Endothelial cell of umbilical vein (primary cell): ENCODE measurements at regions of chrX and their contacts with region 1.

Region 1: DNA sequence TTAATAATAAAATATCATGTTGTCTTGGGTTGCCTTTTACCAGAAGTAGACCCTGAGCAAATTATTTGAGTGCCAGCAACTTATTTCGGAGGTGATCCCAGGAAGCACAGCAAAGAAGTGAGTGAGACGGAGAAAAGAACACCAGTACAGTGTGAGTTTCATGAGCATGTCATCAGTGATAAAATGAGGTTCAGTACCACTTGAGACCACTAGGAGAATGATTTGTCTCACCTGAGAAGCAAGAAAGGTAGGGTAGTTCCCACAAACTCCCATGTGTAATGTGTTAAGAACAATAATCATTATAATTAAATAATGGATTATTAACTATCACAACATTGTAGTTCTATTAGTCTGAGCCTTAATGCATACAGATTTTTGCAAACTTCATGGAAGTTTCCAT is 112.8 kb upstream of the DMD start:
- DNase-seq: no peak
- H3K4me3 ChIP-seq: no peak overlapping the region
- H3K27ac ChIP-seq: no peak overlapping the region
- H3K4me1 ChIP-seq: no peaks in the 10 kb centered on the region
- H3K27me3 ChIP-seq: no peaks in the 10 kb centered on the region
- CTCF ChIP-seq: peak in 1 of 2 donors; percentile 6
- POLR2A ChIP-seq: no peak

Region 2: DNA sequence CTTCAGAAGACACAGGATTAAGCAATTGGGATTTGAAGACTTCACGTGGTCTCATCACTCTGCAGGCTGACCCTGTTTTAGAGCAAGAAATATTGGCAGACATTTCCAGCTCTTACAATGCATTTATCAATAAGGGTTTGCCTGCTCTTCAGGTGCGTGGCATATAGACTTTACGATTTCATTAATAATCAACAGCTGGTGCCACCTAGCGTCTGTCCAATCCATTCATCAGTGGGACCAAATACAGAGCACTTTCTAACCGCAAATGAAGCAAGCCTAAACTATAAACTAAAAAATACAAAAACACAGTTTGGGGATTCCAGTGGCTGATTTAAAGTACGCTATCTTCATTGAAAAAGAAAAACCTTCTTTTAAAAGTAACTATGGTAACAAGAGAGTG is 12.7 kb after region 1 on chrX:
- CTCF ChIA-PET with region 1: interaction called, 4 read pairs
- POLR2A ChIA-PET with region 1: no interaction called
- dilution Hi-C with region 1: no loop called
- intact Hi-C with region 1: loop called (anchors 1 kb)
- DNase-seq: peak; percentile 38
- H3K4me3 ChIP-seq: no peak overlapping the region
- H3K27ac ChIP-seq: no peak overlapping the region
- H3K4me1 ChIP-seq: no peaks in the 10 kb centered on the region
- H3K27me3 ChIP-seq: no peaks in the 10 kb centered on the region
- CTCF ChIP-seq: peak in 1 of 2 donors; percentile 36
- POLR2A ChIP-seq: no peak

Region 3: DNA sequence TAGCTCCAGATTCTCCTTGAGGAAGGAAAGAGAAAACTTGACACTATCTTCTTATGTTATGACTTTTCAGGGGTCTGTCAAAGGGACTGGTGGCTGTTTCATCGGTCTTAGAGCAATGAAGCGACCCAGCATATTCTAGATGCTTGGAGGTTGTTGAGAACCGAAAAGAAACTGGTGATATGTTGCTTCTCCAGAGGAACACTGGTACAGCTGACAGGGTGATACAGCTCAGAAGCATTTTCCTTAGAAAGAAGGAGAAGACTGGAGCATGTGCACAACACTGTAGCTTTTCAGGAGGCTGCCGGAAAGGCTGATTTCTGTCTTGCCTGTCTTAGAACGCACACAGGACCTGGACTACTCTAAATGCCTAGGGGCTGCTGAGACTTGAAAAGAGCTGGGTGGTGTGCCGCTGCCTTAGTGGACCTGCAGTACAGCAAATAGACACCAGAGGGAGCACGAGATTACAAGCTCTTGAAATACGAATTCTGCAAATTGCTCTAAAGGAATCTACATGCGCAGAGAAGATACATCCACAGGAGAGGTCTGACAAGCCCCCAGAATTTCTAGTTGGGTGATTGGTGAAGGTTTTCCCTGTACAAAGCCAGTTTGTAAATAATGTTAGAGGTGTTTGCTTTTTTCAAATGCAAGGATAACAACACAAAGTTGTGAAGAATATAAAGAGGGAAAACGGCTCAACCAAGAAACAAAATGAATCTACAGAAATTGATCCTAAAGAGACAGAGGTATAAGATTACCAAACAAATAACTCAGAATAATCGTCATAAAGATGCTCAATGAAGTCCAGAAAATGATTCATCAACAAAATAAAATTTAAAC is 110.4 kb after region 1 on chrX:
- CTCF ChIA-PET with region 1: no interaction called
- POLR2A ChIA-PET with region 1: no interaction called
- dilution Hi-C with region 1: no loop called
- intact Hi-C with region 1: no loop called
- DNase-seq: peak; percentile 59
- H3K4me3 ChIP-seq: no peak overlapping the region
- H3K27ac ChIP-seq: no peak overlapping the region
- H3K4me1 ChIP-seq: no peaks in the 10 kb centered on the region
- H3K27me3 ChIP-seq: no peaks in the 10 kb centered on the region
- CTCF ChIP-seq: peak; percentile 56 to 63
- POLR2A ChIP-seq: no peak